B cell (primary cell): ENCODE measurements at regions of chr7 and their contacts with region 1.

Region 1: DNA sequence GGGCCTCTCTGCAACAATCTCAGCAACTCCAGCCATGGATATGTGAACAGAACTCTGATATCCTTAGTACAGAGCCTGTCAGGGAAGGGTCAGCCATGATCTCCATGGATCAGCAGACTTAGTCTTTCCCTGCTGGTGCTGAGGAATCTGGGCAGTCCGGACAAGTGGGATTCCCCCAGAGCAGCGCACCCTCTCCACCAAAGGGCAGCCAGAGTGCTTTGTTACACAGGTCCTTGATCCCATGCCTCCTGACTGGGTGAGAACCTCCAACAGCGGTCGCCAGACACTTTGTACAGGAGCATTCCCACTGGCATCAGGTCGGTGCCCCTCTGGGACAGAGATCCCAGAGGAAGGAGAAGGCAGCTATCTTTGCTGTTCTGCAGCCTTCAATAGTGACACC is 38.9 kb downstream of the TPK1 start:
- DNase-seq: no peak
- ATAC-seq: no peak
- H3K4me3 ChIP-seq: no peak overlapping the region
- H3K4me3 Mint-ChIP-seq: no peak overlapping the region
- H3K27ac ChIP-seq: no peak overlapping the region
- H3K27ac Mint-ChIP-seq: no peak overlapping the region
- H3K4me1 ChIP-seq: peaks cover 24 to 28% of the 10 kb centered on the region in 2 donors
- H3K4me1 Mint-ChIP-seq: peaks cover 37% of the 10 kb centered on the region
- H3K27me3 ChIP-seq: no peaks in the 10 kb centered on the region
- H3K27me3 Mint-ChIP-seq: no peaks in the 10 kb centered on the region
- CTCF ChIP-seq: no peak

Region 2: GRCh38 chr7:144682581-144683280 is 114.2 kb before region 1 on chr7:
- CTCF ChIA-PET with region 1: no interaction called
- POLR2A ChIA-PET with region 1: no interaction called
- intact Hi-C with region 1: no loop called
- DNase-seq: no peak
- ATAC-seq: no peak
- H3K4me3 ChIP-seq: no peak overlapping the region
- H3K4me3 Mint-ChIP-seq: no peak overlapping the region
- H3K27ac ChIP-seq: no peak overlapping the region
- H3K27ac Mint-ChIP-seq: no peak overlapping the region
- H3K4me1 ChIP-seq: no peaks in the 10 kb centered on the region
- H3K4me1 Mint-ChIP-seq: no peaks in the 10 kb centered on the region
- H3K27me3 ChIP-seq: no peaks in the 10 kb centered on the region
- H3K27me3 Mint-ChIP-seq: no peaks in the 10 kb centered on the region
- CTCF ChIP-seq: no peak

Region 3: DNA sequence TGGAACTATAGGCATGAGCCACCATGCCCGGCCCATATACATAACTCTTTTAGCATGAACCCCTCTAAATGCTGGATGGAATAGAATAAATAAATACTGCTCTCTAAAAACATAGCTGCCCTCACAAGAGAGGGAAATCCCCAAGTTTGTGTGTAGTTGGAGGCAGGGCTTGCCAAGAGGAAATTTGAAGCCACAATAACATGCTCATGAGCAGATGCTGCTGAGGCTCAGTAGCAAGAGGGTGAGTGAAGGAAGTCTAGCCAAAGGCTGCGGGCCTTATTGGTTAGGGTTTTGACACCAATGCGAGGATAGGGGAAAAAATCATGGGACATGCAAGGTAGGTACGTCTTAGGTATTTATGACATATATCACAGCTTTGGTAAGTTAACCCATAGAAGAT is 21.6 kb after region 1 on chr7:
- CTCF ChIA-PET with region 1: interaction called, 3 read pairs
- POLR2A ChIA-PET with region 1: no interaction called
- intact Hi-C with region 1: loop called (anchors 1 kb)
- DNase-seq: peak; percentile 79
- ATAC-seq: peak; percentile 95
- H3K4me3 ChIP-seq: no peak overlapping the region
- H3K4me3 Mint-ChIP-seq: peak overlapping the region; percentile 59
- H3K27ac ChIP-seq: peak overlapping the region; percentile 59 to 83
- H3K27ac Mint-ChIP-seq: peak overlapping the region; percentile 84
- H3K4me1 ChIP-seq: peaks cover 37 to 55% of the 10 kb centered on the region in 2 donors
- H3K4me1 Mint-ChIP-seq: peaks cover 67% of the 10 kb centered on the region
- H3K27me3 ChIP-seq: no peaks in the 10 kb centered on the region
- H3K27me3 Mint-ChIP-seq: no peaks in the 10 kb centered on the region
- CTCF ChIP-seq: no peak

Region 4: GRCh38 chr7:145082366-145083161 is 285.6 kb after region 1 on chr7:
- CTCF ChIA-PET with region 1: no interaction called
- POLR2A ChIA-PET with region 1: no interaction called
- intact Hi-C with region 1: no loop called
- DNase-seq: no peak
- ATAC-seq: no peak
- H3K4me3 ChIP-seq: no peak overlapping the region
- H3K4me3 Mint-ChIP-seq: no peak overlapping the region
- H3K27ac ChIP-seq: no peak overlapping the region
- H3K27ac Mint-ChIP-seq: no peak overlapping the region
- H3K4me1 ChIP-seq: no peaks in the 10 kb centered on the region
- H3K4me1 Mint-ChIP-seq: no peaks in the 10 kb centered on the region
- H3K27me3 ChIP-seq: no peaks in the 10 kb centered on the region
- H3K27me3 Mint-ChIP-seq: no peaks in the 10 kb centered on the region
- CTCF ChIP-seq: no peak